ENCODE measurements at regions of chr7 and their contacts with region 1.

Region 1: GRCh38 chr7:55255496-55256435 is 109.4 kb upstream of the LANCL2 start:
- DNase-seq: peak; percentile 32
- H3K4me3 ChIP-seq: peak overlapping the region; percentile 70
- H3K27ac ChIP-seq: peak overlapping the region; percentile 47
- H3K27me3 ChIP-seq: peaks cover 3% of the 10 kb centered on the region
- CTCF ChIP-seq: peak; percentile 80

Region 2: GRCh38 chr7:54788664-54789063 is 467.1 kb before region 1 on chr7:
- CTCF ChIA-PET with region 1: interaction called, 72 read pairs
- POLR2A ChIA-PET with region 1: interaction called, 3 read pairs
- DNase-seq: peak; percentile 81
- H3K4me3 ChIP-seq: no peak overlapping the region; the same call in 1 of the 2 replicates
- H3K27ac ChIP-seq: no peak overlapping the region
- H3K27me3 ChIP-seq: no peaks in the 10 kb centered on the region
- CTCF ChIP-seq: peak; percentile 84

Region 3: GRCh38 chr7:55018361-55019190 is 237.2 kb before region 1 on chr7 and contains the start of gene EGFR:
- CTCF ChIA-PET with region 1: interaction called, 30 read pairs
- POLR2A ChIA-PET with region 1: interaction called, 4 read pairs
- DNase-seq: peak; percentile 34
- H3K4me3 ChIP-seq: peak within 1 kb of the TSS; percentile 77
- H3K27ac ChIP-seq: peak within 1 kb of the TSS; percentile 47
- H3K27me3 ChIP-seq: no peaks in the 10 kb centered on the region
- CTCF ChIP-seq: no peak
- polyA plus RNA-seq, gene EGFR: 59.0 and 62.6 TPM in 2 replicates

Region 4: GRCh38 chr7:55073051-55073511 is 182.7 kb before region 1 on chr7:
- CTCF ChIA-PET with region 1: interaction called, 18 read pairs
- POLR2A ChIA-PET with region 1: no interaction called
- DNase-seq: no peak
- H3K4me3 ChIP-seq: no peak overlapping the region
- H3K27ac ChIP-seq: peak overlapping the region; percentile 80
- H3K27me3 ChIP-seq: no peaks in the 10 kb centered on the region
- CTCF ChIP-seq: no peak

Region 5: GRCh38 chr7:55110661-55111361 is 145.0 kb before region 1 on chr7:
- CTCF ChIA-PET with region 1: interaction called, 19 read pairs
- POLR2A ChIA-PET with region 1: interaction called, 3 read pairs
- DNase-seq: peak; percentile 49
- H3K4me3 ChIP-seq: no peak overlapping the region
- H3K27ac ChIP-seq: peak overlapping the region; percentile 58
- H3K27me3 ChIP-seq: no peaks in the 10 kb centered on the region
- CTCF ChIP-seq: no peak

Region 6: DNA sequence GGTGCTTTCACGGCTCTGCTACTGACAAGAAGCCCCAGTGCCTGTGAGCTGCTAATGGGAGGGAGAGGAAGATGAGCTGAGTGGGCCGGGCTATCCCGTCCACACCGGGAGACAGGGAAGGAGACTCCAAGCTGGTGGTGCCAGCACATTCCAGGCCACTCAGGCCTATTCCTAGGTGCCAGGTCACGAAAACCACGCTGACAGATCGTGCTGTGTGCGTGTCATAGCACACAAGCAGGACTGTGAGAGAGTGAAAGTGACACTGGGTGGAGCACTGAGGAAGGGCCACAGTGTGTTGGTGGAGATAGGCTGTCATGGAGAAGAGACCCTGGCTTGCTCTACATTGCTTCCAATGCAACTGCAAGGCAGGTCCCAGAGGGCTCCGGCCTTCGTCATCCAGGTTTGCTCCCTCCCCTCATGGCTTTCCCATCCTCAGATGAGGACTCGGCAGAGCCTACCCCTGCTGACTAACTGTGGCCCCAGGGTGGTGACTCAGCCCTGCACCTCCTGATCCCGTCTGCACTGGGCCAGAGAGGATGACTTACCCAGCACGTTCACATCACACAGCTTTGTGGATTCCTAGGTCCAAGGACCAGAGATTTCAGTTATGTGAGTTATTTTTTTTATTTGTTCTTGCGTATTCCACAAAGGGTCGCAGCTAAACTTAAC is 69.7 kb before region 1 on chr7:
- CTCF ChIA-PET with region 1: interaction called, 12 read pairs
- POLR2A ChIA-PET with region 1: no interaction called
- DNase-seq: peak; percentile 76
- H3K4me3 ChIP-seq: no peak overlapping the region
- H3K27ac ChIP-seq: peak overlapping the region; percentile 84
- H3K27me3 ChIP-seq: no peaks in the 10 kb centered on the region
- CTCF ChIP-seq: no peak

Region 7: GRCh38 chr7:55265836-55266642 is 10.3 kb after region 1 on chr7:
- CTCF ChIA-PET with region 1: interaction called, 32 read pairs
- POLR2A ChIA-PET with region 1: no interaction called
- DNase-seq: no peak
- H3K4me3 ChIP-seq: no peak overlapping the region
- H3K27ac ChIP-seq: no peak overlapping the region
- H3K27me3 ChIP-seq: peaks cover 24% of the 10 kb centered on the region
- CTCF ChIP-seq: no peak